ENCODE measurements at regions of chr1 and their contacts with region 1.

Region 1: GRCh38 chr1:76147917-76148316 is 73.4 kb downstream of the ST6GALNAC3 start:
- DNase-seq: no peak
- H3K4me3 ChIP-seq: no peak overlapping the region
- H3K27ac ChIP-seq: no peak overlapping the region
- H3K4me1 ChIP-seq: no peaks in the 10 kb centered on the region
- H3K27me3 ChIP-seq: no peaks in the 10 kb centered on the region
- CTCF ChIP-seq: no peak

Region 2: GRCh38 chr1:75985827-75986226 is 162.1 kb before region 1 on chr1:
- CTCF ChIA-PET with region 1: interaction called, 11 read pairs
- POLR2A ChIA-PET with region 1: no interaction called
- intact Hi-C with region 1: no loop called
- DNase-seq: no peak
- H3K4me3 ChIP-seq: no peak overlapping the region
- H3K27ac ChIP-seq: no peak overlapping the region
- H3K4me1 ChIP-seq: no peaks in the 10 kb centered on the region
- H3K27me3 ChIP-seq: peaks cover 32% of the 10 kb centered on the region
- CTCF ChIP-seq: no peak

Region 3: DNA sequence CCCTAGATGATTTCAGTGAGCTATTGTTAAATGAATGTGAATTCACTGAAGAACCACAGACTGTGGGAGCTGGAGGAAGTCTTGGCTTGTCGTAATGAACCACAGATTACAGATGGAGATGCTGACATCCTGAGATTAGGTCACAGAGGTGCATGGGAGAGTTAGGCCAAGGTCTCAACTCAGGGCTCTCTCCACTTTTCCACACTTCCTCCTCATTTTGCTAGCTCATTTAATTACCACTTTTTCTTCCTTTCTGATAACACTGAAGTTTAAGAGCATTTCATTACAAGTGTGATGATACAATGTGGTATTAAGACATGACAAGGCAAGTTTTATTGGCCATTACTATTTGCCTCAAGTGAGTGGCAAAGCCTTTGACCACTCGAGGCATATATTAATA is 42.5 kb before region 1 on chr1:
- CTCF ChIA-PET with region 1: no interaction called
- POLR2A ChIA-PET with region 1: no interaction called
- intact Hi-C with region 1: no loop called
- DNase-seq: no peak
- H3K4me3 ChIP-seq: no peak overlapping the region
- H3K27ac ChIP-seq: no peak overlapping the region
- H3K4me1 ChIP-seq: no peaks in the 10 kb centered on the region
- H3K27me3 ChIP-seq: no peaks in the 10 kb centered on the region
- CTCF ChIP-seq: no peak

Measured in A673 (cell line).